ENCODE measurements at regions of chr7 and their contacts with region 1.

Region 1: DNA sequence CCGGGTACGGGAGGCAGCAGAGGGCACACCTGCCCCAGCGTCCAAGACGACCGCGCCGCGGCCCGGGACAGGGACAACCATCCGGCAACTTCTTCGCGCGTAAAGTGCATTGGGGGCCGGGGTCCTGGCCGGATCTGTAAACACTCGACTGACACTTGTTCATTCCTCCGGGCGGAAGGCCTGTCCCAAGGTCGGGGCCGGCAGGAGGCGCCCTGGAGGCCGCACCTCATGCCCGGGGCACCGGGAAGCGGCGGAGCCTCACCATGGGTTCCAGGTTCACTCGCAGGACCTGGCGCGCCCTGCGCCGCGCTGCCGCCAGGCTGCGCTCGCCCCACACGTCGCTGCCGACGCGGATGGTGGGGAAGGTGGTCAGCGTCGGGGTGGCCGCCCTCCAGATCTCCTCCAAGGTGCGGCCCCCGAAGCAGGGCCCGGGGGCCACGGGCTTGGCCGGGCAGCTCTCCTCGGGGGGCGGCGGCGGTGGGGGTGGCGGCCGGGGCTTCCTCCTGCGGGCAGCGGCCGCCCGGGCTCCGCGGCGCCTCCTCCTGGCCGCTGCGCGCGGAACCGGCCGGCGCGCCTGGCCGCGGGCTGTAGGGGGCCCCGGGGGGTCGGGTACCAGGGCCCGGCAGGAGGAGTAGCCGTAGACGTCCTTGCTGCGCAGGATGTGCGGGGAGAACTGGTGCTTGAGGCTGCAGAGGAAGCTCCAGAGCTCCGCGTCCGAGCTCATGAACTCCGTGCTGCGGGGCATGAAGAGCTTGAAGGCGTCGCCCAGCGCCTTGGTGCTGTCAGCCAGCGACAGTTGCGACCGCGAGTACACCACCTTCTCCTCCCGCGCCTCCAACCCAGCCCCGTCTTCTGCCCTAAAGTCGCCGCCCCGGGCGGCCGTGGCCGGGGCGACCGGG is 746 bp downstream of the CCDC71L start:
- DNase-seq: peak; percentile 78
- H3K4me3 Mint-ChIP-seq: peak overlapping the region; percentile 87
- H3K27ac Mint-ChIP-seq: peak overlapping the region; percentile 95
- H3K4me1 Mint-ChIP-seq: peaks cover 31% of the 10 kb centered on the region
- H3K27me3 Mint-ChIP-seq: peaks cover 9% of the 10 kb centered on the region

Region 2: DNA sequence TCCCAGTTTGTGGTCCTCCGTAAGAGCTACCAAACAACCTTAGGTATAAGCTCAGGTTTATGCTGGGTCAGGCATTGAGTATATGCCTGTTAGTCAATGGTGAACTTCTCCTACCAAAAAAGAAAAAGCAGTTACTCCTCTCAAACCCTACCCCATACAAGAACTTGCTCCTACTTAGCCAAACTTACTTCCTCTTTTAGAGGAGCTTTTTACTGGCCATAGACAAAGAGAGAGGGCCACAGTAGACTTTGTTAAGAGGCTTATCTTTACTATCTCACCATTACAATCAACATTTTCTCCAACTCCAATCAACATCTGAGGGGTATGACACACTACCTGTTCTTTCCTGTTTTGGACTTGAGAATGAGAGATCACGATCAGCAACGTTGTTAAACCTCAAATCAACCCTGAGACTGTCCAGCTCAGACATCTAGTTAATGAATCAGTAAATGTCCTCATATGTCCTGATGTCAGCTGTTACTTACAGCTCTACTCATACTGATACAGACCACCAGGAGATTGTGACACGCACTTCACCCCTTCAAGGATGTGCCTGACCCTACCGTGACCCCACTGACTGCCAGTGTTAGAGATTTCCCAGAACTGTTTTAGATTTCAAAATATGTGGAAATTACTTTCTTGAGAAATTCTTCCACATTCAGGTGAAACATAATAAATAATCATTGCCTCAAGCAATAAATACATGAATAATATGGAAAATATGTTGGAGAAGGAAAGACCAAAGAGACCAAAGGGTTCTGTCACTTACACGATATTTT is 19.1 kb after region 1 on chr7:
- CTCF ChIA-PET with region 1: interaction called, 16 read pairs
- POLR2A ChIA-PET with region 1: no interaction called
- DNase-seq: no peak
- H3K4me3 Mint-ChIP-seq: no peak overlapping the region
- H3K27ac Mint-ChIP-seq: no peak overlapping the region
- H3K4me1 Mint-ChIP-seq: peaks cover 9% of the 10 kb centered on the region
- H3K27me3 Mint-ChIP-seq: peaks cover 7% of the 10 kb centered on the region

Region 3: DNA sequence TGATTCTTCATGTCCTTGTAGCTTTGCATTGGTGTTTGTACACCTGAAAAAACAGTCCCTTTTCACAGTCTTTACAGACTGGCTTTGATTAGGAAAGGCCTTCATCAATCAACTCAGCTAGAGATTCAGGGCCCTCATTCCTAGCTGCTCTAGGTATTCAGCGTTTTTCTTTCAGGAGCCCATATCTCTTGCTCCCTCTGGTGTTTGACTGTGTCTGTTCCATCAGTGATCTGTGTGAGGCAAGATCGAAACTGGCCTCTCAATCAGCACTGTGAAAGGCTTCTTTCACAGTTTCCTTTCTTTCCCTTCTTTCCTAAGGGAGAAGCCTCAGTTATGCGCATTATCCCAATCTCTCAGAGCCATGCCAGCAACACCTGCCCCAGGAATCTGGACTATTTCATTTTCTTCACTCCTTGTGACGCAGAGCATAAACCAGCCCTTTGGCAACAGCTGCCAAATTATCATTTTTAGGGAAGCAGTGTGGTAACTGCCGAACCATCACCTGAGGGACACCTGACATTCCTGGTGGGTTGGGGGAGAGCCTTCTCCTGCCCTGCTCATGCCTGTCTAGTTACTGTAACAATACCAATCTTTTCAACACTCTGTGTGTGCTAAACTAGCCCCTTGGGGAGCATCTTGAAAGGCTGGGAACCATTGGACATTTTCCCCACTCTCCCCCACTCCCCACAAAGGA is 76.4 kb after region 1 on chr7:
- CTCF ChIA-PET with region 1: interaction called, 41 read pairs
- POLR2A ChIA-PET with region 1: no interaction called
- DNase-seq: peak; percentile 57
- H3K4me3 Mint-ChIP-seq: no peak overlapping the region
- H3K27ac Mint-ChIP-seq: no peak overlapping the region
- H3K4me1 Mint-ChIP-seq: peaks cover 19% of the 10 kb centered on the region
- H3K27me3 Mint-ChIP-seq: no peaks in the 10 kb centered on the region